Activated CD8-positive, alpha-beta T cell treated with anti-CD3 and anti-CD28 coated beads, Interleukin-2, amount 10 ng/mL, durations not matched to agents 7 days and 5 days (primary cell): ENCODE measurements at regions of chr3 and their contacts with region 1.

Region 1: GRCh38 chr3:32238453-32239306 is at the start of gene CMTM8:
- DNase-seq: peak; percentile 64
- ATAC-seq: peak; percentile 85
- H3K4me3 Mint-ChIP-seq: peak within 1 kb of the TSS; percentile 78
- H3K27ac Mint-ChIP-seq: no peak within 1 kb of the TSS
- H3K4me1 Mint-ChIP-seq: peaks cover 22% of the 10 kb centered on the region
- H3K27me3 Mint-ChIP-seq: peaks cover 39% of the 10 kb centered on the region
- total RNA-seq, gene CMTM8: 2.1 TPM

Region 2: GRCh38 chr3:32089476-32089875 is 149.2 kb before region 1 on chr3:
- CTCF ChIA-PET with region 1: no interaction called
- POLR2A ChIA-PET with region 1: no interaction called
- DNase-seq: no peak
- ATAC-seq: no peak
- H3K4me3 Mint-ChIP-seq: no peak overlapping the region
- H3K27ac Mint-ChIP-seq: no peak overlapping the region
- H3K4me1 Mint-ChIP-seq: peaks cover 19% of the 10 kb centered on the region
- H3K27me3 Mint-ChIP-seq: peaks cover 31% of the 10 kb centered on the region

Region 3: GRCh38 chr3:32220006-32220405 is 18.7 kb before region 1 on chr3:
- CTCF ChIA-PET with region 1: interaction called, 15 read pairs
- POLR2A ChIA-PET with region 1: no interaction called
- DNase-seq: no peak
- ATAC-seq: no peak
- H3K4me3 Mint-ChIP-seq: no peak overlapping the region
- H3K27ac Mint-ChIP-seq: no peak overlapping the region
- H3K4me1 Mint-ChIP-seq: peaks cover 4% of the 10 kb centered on the region
- H3K27me3 Mint-ChIP-seq: peaks cover 12% of the 10 kb centered on the region

Region 4: GRCh38 chr3:32249184-32249782 is 10.6 kb after region 1 on chr3:
- CTCF ChIA-PET with region 1: interaction called, 21 read pairs
- POLR2A ChIA-PET with region 1: no interaction called
- DNase-seq: no peak
- ATAC-seq: no peak
- H3K4me3 Mint-ChIP-seq: no peak overlapping the region
- H3K27ac Mint-ChIP-seq: no peak overlapping the region
- H3K4me1 Mint-ChIP-seq: peaks cover 18% of the 10 kb centered on the region
- H3K27me3 Mint-ChIP-seq: peaks cover 3% of the 10 kb centered on the region

Region 5: DNA sequence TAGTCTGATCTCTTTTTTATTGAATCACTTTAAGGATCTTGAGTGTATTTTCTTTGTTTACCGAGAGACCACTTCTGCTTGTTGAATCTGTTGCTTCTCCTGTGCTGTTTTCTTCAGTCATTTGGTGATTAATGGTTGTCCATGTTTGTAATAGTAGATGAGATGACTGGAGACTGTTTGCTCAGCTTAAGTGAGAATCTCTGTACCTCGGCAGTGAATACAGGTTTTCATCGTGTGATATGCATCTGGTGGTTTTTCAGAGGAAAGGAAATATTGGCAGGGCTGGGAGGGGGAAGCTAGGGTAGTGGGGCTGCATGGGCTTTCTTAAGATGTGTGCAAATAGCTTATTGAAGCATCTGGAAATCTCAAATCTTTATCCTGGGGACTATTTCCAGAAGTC is 19.0 kb after region 1 on chr3:
- CTCF ChIA-PET with region 1: interaction called, 13 read pairs
- POLR2A ChIA-PET with region 1: no interaction called
- DNase-seq: no peak
- ATAC-seq: no peak
- H3K4me3 Mint-ChIP-seq: no peak overlapping the region
- H3K27ac Mint-ChIP-seq: no peak overlapping the region
- H3K4me1 Mint-ChIP-seq: peaks cover 9% of the 10 kb centered on the region
- H3K27me3 Mint-ChIP-seq: no peaks in the 10 kb centered on the region

Region 6: GRCh38 chr3:32285891-32286290 is 47.2 kb after region 1 on chr3:
- CTCF ChIA-PET with region 1: interaction called, 30 read pairs
- POLR2A ChIA-PET with region 1: no interaction called
- DNase-seq: no peak
- ATAC-seq: no peak
- H3K4me3 Mint-ChIP-seq: no peak overlapping the region
- H3K27ac Mint-ChIP-seq: no peak overlapping the region
- H3K4me1 Mint-ChIP-seq: peaks cover 7% of the 10 kb centered on the region
- H3K27me3 Mint-ChIP-seq: no peaks in the 10 kb centered on the region

Region 7: GRCh38 chr3:32334675-32335074 is 96.0 kb after region 1 on chr3:
- CTCF ChIA-PET with region 1: interaction called, 23 read pairs
- POLR2A ChIA-PET with region 1: no interaction called
- DNase-seq: peak; percentile 56
- ATAC-seq: peak; percentile 60
- H3K4me3 Mint-ChIP-seq: no peak overlapping the region
- H3K27ac Mint-ChIP-seq: no peak overlapping the region
- H3K4me1 Mint-ChIP-seq: peaks cover 18% of the 10 kb centered on the region
- H3K27me3 Mint-ChIP-seq: no peaks in the 10 kb centered on the region